ENCODE measurements at regions of chr5 and their contacts with region 1.

Region 1: GRCh38 chr5:179559284-179560252 is 9.2 kb downstream of the RUFY1 start:
- DNase-seq: peak; percentile 99
- H3K4me3 ChIP-seq: peak overlapping the region; percentile 46 to 56 (median 54)
- H3K27ac ChIP-seq: peak overlapping the region; percentile 85 to 93 (median 89)
- H3K4me1 ChIP-seq: peaks cover 0 to 16% (median 15%) of the 10 kb centered on the region in 4 donors
- H3K27me3 ChIP-seq: no peaks in the 10 kb centered on the region
- CTCF ChIP-seq: no peak
- EP300 ChIP-seq: no peak
- POLR2A ChIP-seq: peak; percentile 89 to 94

Region 2: DNA sequence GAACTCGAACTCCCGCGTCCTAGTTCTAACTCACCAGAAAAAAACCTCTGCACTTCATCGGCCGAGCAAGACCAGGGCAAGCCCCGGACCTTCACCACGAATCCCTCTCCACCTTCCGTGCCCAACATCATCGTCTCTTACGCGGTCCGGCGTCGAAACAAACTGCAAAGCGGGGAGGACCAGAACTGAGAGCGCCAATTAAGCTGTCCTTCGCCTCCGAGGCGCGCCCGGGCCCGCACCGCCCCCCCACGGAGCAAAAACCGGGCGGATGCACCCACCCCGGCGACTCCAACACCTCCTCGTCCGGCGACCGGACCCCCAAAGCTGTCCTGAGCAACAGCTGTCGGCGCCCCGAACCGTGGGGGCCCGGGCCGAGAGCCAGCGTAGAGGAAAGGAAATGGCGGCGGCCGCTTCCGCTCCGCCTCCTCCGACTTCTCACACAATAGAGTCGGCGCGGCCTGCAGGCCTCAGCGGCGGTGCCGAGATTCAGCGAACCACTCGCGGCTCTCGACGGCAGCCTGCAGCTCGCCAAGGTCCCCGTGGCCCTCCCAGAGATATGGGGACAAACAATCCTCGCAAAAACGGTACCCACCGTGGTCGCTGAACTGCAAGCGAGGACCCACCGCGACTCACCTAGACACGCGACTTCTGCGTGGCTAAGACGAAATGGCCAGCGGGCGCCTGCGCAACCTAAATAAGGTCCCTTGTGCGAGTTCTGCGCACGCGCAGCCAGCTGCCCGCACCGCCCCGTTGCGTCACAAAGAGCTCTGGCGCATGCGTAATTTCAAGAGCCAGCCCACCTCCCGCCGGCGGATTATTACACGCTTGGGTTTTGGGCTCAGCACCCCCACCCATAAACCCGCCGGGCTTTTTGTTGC is 63.7 kb after region 1 on chr5 and contains the start of gene HNRNPH1:
- intact Hi-C with region 1: loop called (anchors 5 kb)
- DNase-seq: peak; percentile 100
- H3K4me3 ChIP-seq: peak within 1 kb of the TSS; percentile 98 to 100 (median 100)
- H3K27ac ChIP-seq: peak within 1 kb of the TSS; percentile 100
- H3K4me1 ChIP-seq: peaks cover 0 to 50% (median 48%) of the 10 kb centered on the region in 4 donors
- H3K27me3 ChIP-seq: no peaks in the 10 kb centered on the region
- CTCF ChIP-seq: peak in 1 of 4 experiments; percentile 9
- EP300 ChIP-seq: peak in 2 of 4 donors; percentile 24 to 40
- POLR2A ChIP-seq: peak; percentile 100
- total RNA-seq, gene HNRNPH1: 264 to 495 (median 312) TPM

Region 3: GRCh38 chr5:180618819-180619562 is 1059.4 kb after region 1 on chr5:
- intact Hi-C with region 1: no loop called
- DNase-seq: no peak
- H3K4me3 ChIP-seq: peak overlapping the region in 2 of 4 donors; percentile 30 to 34
- H3K27ac ChIP-seq: no peak overlapping the region
- H3K4me1 ChIP-seq: peaks cover 0 to 11% (median 5%) of the 10 kb centered on the region in 4 donors
- H3K27me3 ChIP-seq: peaks cover 0 to 26% (median 10%) of the 10 kb centered on the region in 3 donors
- CTCF ChIP-seq: no peak
- EP300 ChIP-seq: no peak
- POLR2A ChIP-seq: no peak

Measured in sigmoid colon (tissue), 7 donors.